Heart left ventricle (tissue), 16 donors: ENCODE measurements at regions of chr3 and their contacts with region 1.

Region 1: GRCh38 chr3:177624514-177625495 is 427.5 kb upstream of the TBL1XR1 start:
- DNase-seq: no peak
- ATAC-seq: no peak
- H3K4me3 ChIP-seq: no peak overlapping the region
- H3K27ac ChIP-seq: no peak overlapping the region
- H3K4me1 ChIP-seq: peaks cover 0 to 19% (median 12%) of the 10 kb centered on the region in 12 donors
- H3K27me3 ChIP-seq: no peaks in the 10 kb centered on the region
- CTCF ChIP-seq: no peak
- POLR2A ChIP-seq: no peak

Region 2: DNA sequence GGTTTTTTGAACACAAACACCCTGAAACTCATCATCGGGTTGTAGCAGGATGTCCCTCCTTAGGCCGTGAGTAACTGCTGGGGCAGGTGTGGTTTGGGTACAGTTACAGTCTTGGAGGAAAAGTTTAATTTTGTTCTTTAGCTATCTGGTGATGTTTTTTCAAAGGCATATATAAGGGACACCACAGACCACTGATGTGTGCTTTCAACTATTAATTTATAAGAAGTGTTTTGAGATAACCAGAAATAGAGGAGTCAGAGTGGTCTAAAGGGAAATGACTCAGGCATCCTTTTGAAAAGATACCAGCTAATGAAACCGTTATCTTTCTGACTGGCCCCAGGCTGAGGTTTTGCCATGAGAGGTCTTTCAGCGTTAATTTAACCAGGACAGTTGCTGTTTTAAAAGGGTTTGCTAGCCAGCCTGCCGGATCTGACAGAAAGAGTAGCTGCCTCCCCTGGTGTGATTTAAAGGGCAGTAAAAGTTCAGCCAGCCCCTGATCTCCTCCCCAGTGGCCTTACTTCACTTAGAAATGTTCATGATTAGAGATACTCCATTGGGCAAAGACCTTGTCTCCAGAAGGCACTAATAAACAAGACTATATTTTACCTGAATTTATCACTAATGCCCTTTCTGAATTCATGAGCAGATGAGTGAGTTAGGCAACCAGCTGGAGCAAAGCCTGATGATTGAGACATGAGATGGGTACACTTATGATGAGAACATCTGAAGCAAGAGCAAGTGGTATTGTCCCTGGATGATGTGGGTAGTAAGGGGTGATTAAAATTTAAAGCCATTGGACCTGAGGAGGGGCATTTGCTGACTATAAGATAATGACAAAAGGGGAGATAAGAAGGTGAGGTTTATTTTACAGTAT is 55.0 kb after region 1 on chr3:
- intact Hi-C with region 1: loop called in 1 of 10 experiments (anchors 10 kb)
- DNase-seq: no peak
- ATAC-seq: peak in 3 of 4 donors; percentile 26 to 38 (median 33)
- H3K4me3 ChIP-seq: no peak overlapping the region
- H3K27ac ChIP-seq: peak overlapping the region in 1 of 12 donors; percentile 74
- H3K4me1 ChIP-seq: peaks cover 0 to 34% (median 6%) of the 10 kb centered on the region in 12 donors
- H3K27me3 ChIP-seq: no peaks in the 10 kb centered on the region
- CTCF ChIP-seq: no peak
- POLR2A ChIP-seq: no peak